Dendritic cell treated with granulocyte-macrophage colony-stimulating factor and Interleukin-4, amounts not matched to agents 40 ng/mL and 50 ng/mL, for 4 days (primary cell): ENCODE measurements at regions of chr14 and their contacts with region 1.

Region 1: DNA sequence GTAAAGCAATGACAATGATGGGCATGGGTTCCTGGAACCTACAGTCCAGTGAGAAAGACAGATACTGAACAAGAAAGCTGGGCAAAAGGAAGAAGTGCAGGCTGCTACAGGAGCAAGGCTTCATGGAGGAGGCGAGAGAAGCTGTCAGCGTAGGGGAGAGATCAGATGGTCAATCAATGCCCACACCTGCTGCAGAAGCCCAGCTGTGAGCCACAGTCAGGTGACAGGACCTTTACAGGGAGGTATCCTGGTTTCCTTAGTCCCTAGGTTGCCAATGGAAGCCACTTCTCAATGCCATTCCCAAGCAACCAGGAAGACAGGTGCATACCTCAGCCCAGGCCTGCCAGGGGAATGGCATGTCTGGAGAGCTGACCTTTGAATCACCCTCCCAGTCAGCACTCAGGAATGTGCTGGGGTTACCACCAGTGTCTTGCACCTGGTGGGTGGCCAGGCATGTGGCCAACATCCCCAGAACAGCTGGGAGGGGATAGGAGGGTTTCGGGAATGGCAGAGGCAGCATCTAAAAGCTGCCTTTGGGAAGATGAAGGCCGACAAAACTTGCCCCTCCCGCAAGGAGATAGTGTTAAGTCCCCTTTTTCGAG is 170.3 kb downstream of the TTC7B start:
- H3K4me3 Mint-ChIP-seq: no peak overlapping the region
- H3K27ac Mint-ChIP-seq: no peak overlapping the region
- H3K4me1 Mint-ChIP-seq: peaks cover 65% of the 10 kb centered on the region
- H3K27me3 Mint-ChIP-seq: no peaks in the 10 kb centered on the region

Region 2: GRCh38 chr14:90599748-90600507 is 46.0 kb before region 1 on chr14:
- intact Hi-C with region 1: no loop called
- H3K4me3 Mint-ChIP-seq: peak overlapping the region; percentile 27
- H3K27ac Mint-ChIP-seq: peak overlapping the region; percentile 30
- H3K4me1 Mint-ChIP-seq: peaks cover 29% of the 10 kb centered on the region
- H3K27me3 Mint-ChIP-seq: peaks cover 5% of the 10 kb centered on the region

Region 3: DNA sequence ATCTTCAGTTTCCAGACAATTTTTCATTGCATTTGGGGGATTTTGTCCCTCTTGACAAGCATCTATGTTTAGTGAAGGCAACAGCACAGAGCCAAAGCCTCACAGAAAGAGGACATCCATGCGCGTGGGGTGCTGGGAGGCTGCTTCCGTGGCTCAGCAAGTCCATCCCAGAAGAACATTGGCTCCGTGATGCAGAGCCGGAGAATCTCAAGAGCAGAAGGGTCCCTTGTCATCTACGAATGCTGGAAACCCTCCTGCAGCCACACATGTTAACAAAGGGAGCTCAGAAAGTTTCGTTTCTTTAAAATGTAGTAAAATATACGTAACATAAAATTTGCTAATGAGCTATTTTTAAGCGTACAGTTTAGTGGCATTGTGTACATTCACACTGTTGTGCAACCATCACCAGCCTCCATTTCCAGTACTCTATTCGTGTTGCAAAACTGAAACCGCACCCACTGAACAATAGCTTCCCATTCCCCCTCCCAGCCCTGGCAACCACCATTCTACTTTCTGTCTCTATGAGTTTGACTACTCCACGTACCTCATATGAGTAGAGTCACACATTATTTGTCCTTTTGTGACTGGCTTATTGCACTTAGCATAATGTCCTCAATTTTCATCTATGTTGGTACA is 15.7 kb before region 1 on chr14:
- intact Hi-C with region 1: loop called (anchors 2 kb)
- H3K4me3 Mint-ChIP-seq: peak overlapping the region; percentile 58
- H3K27ac Mint-ChIP-seq: peak overlapping the region; percentile 93
- H3K4me1 Mint-ChIP-seq: peaks cover 57% of the 10 kb centered on the region
- H3K27me3 Mint-ChIP-seq: no peaks in the 10 kb centered on the region

Region 4: GRCh38 chr14:90865484-90865883 is 219.5 kb after region 1 on chr14:
- intact Hi-C with region 1: no loop called
- H3K4me3 Mint-ChIP-seq: no peak overlapping the region
- H3K27ac Mint-ChIP-seq: no peak overlapping the region
- H3K4me1 Mint-ChIP-seq: no peaks in the 10 kb centered on the region
- H3K27me3 Mint-ChIP-seq: no peaks in the 10 kb centered on the region